Adrenal gland (tissue), 19 donors: ENCODE measurements at regions of chr14 and their contacts with region 1.

Region 1: GRCh38 chr14:104137297-104138097 is 890 bp upstream of the KIF26A start:
- DNase-seq: peak; percentile 48 to 78 (median 64)
- H3K4me3 ChIP-seq: peak overlapping the region in 2 of 4 donors; percentile 15 to 65
- H3K27ac ChIP-seq: peak overlapping the region in 2 of 5 donors; percentile 15 to 62
- H3K4me1 ChIP-seq: peaks cover 0 to 17% of the 10 kb centered on the region in 2 donors
- H3K27me3 ChIP-seq: peaks cover 49% of the 10 kb centered on the region
- CTCF ChIP-seq: peak; percentile 56 to 97 (median 79)
- POLR2A ChIP-seq: peak in 1 of 2 donors; percentile 16

Region 2: DNA sequence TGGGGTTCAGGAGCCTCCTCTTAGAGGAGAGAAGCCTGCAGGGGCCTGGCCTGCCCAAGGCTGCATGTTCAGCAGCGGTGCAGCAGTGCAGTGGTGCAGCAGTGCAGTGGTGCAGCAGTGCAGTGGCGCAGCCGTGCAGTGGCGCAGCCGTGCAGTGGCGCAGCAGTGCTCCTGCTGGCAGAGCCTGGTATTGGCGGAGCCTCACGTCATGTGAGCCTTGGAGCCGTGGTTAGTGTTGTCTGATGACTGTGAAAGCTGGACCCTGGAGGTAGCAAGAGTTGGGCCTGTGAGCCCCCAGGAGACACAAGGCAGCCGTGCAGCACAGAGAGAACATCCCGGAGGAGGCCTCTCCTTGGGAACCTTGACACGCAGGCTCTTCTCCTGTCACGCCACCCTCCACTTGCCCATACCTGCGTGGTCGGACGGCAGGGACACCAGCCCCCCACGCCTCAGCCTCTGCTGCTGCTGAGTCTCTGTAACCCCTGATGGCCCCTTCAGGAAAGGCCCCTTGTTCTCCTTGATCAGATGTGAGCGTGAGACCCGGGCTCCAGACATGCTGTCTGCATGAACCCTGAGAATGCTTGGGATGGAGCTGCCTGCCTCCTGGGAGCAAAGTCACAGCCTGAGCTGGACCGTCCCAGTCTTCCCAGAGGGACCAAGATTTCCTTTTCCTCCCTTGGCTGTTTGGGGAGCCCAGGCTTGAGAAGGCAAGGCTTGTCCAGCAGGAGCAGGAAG is 194.5 kb after region 1 on chr14:
- intact Hi-C with region 1: no loop called
- DNase-seq: peak in 1 of 7 donors; percentile 28
- H3K4me3 ChIP-seq: no peak overlapping the region
- H3K27ac ChIP-seq: no peak overlapping the region
- H3K4me1 ChIP-seq: no peaks in the 10 kb centered on the region
- H3K27me3 ChIP-seq: no peaks in the 10 kb centered on the region
- CTCF ChIP-seq: no peak
- POLR2A ChIP-seq: no peak

Region 3: GRCh38 chr14:104563742-104564615 is 426.5 kb after region 1 on chr14:
- intact Hi-C with region 1: loop called (anchors 2 to 5 kb)
- DNase-seq: peak; percentile 64 to 90 (median 77)
- H3K4me3 ChIP-seq: no peak overlapping the region
- H3K27ac ChIP-seq: no peak overlapping the region
- H3K4me1 ChIP-seq: no peaks in the 10 kb centered on the region
- H3K27me3 ChIP-seq: peaks cover 10% of the 10 kb centered on the region
- CTCF ChIP-seq: peak; percentile 60 to 93 (median 88)
- POLR2A ChIP-seq: no peak

Region 4: DNA sequence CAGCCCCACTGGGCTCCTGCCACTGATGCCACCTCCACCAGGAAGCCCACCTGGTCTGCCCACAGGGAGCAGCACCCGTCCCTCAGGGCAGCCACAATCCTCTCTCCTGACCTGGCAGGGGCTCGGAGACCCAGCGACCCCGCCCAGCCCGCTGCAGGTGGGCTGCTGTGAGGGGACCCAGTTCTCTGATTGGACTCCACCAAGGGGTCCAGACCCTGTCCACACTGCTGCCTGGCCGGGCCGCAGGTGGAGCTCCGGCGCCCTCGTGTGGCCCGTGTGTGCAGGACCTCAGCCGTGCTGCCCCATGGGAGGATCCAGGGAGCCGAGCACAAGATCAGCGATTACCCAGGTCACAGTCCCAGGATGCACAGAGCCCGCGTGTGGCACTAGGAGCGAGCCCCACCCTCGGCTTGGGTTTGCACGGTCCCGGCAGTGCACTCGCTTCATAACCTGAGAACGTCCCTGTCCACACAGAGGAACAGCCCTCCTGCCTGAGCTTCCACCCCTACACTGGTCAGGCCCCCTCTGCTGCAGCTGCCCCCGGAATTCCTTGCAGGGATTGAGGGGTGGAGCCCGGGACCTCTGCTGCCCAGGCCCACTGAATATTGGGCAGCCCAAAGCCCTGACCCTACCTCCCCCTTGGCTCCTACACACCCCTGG is 502.5 kb after region 1 on chr14:
- intact Hi-C with region 1: loop called (anchors 5 to 10 kb)
- DNase-seq: peak; percentile 51 to 80 (median 65)
- H3K4me3 ChIP-seq: no peak overlapping the region
- H3K27ac ChIP-seq: no peak overlapping the region
- H3K4me1 ChIP-seq: no peaks in the 10 kb centered on the region
- H3K27me3 ChIP-seq: no peaks in the 10 kb centered on the region
- CTCF ChIP-seq: peak; percentile 71 to 91 (median 85)
- POLR2A ChIP-seq: no peak